ENCODE measurements at regions of chr1 and their contacts with region 1.

Region 1: GRCh38 chr1:151993654-151994496 is at the start of gene S100A10:
- DNase-seq: peak; percentile 46
- ATAC-seq: peak; percentile 82
- H3K4me3 ChIP-seq: peak within 1 kb of the TSS; percentile 69 to 89 (median 81)
- H3K27ac ChIP-seq: peak within 1 kb of the TSS; percentile 50
- H3K4me1 ChIP-seq: peaks cover 56% of the 10 kb centered on the region
- H3K27me3 ChIP-seq: no peaks in the 10 kb centered on the region; a peak in 1 of 5 replicates
- CTCF ChIP-seq: no peak
- EP300 ChIP-seq: no peak
- POLR2A ChIP-seq: peak in 1 of 2 experiments; percentile 78; a peak in 2 of 4 replicates
- RAD21 ChIP-seq: no peak
- total RNA-seq, gene S100A10: 16.8 and 25.6 TPM in 2 replicates

Region 2: GRCh38 chr1:151961833-151962232 is 32.0 kb before region 1 on chr1:
- CTCF ChIA-PET with region 1: no interaction called
- POLR2A ChIA-PET with region 1: no interaction called
- in situ Hi-C with region 1: loop called (anchors 5 kb)
- intact Hi-C with region 1: no loop called
- DNase-seq: no peak
- ATAC-seq: no peak
- H3K4me3 ChIP-seq: no peak overlapping the region
- H3K27ac ChIP-seq: no peak overlapping the region
- H3K4me1 ChIP-seq: no peaks in the 10 kb centered on the region
- H3K27me3 ChIP-seq: no peaks in the 10 kb centered on the region; a peak in 1 of 5 replicates
- CTCF ChIP-seq: no peak
- EP300 ChIP-seq: no peak
- POLR2A ChIP-seq: no peak
- RAD21 ChIP-seq: no peak

Region 3: GRCh38 chr1:151976858-151977257 is 17.0 kb before region 1 on chr1:
- CTCF ChIA-PET with region 1: no interaction called
- POLR2A ChIA-PET with region 1: interaction called, 19 read pairs
- in situ Hi-C with region 1: no loop called
- intact Hi-C with region 1: loop called (anchors 2 kb)
- DNase-seq: no peak
- ATAC-seq: peak; percentile 51; the same call in 2 of the 3 replicates
- H3K4me3 ChIP-seq: no peak overlapping the region
- H3K27ac ChIP-seq: peak overlapping the region; percentile 2
- H3K4me1 ChIP-seq: peaks cover 60% of the 10 kb centered on the region
- H3K27me3 ChIP-seq: no peaks in the 10 kb centered on the region
- CTCF ChIP-seq: no peak
- EP300 ChIP-seq: no peak
- POLR2A ChIP-seq: no peak
- RAD21 ChIP-seq: no peak

Region 4: DNA sequence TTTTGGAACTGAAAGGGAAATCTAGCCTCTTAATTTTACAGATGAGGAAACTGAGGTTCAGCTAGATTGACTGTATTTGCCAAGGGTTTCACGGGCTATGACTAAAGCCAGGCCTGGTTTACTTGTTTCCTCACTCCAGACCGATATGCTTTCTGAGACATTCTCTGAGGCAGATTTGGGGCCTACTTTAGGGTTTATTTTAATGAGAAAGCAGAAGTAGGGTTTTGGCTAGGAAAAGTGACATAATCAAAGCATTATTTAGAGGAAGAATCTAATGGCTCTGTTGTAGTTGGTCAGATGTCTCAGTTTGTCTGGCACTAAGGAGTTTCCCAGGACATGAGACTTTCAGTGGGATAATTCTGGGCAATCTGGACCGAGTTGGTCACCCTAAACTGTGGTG is 166.7 kb after region 1 on chr1:
- CTCF ChIA-PET with region 1: no interaction called
- POLR2A ChIA-PET with region 1: no interaction called
- in situ Hi-C with region 1: no loop called
- intact Hi-C with region 1: no loop called
- DNase-seq: no peak
- ATAC-seq: no peak
- H3K4me3 ChIP-seq: no peak overlapping the region
- H3K27ac ChIP-seq: no peak overlapping the region
- H3K4me1 ChIP-seq: peaks cover 17% of the 10 kb centered on the region
- H3K27me3 ChIP-seq: no peaks in the 10 kb centered on the region
- CTCF ChIP-seq: no peak
- EP300 ChIP-seq: no peak
- POLR2A ChIP-seq: no peak
- RAD21 ChIP-seq: no peak

Measured in HepG2 (cell line).